H1 (cell line): ENCODE measurements at regions of chr14 and their contacts with region 1.

Region 1: DNA sequence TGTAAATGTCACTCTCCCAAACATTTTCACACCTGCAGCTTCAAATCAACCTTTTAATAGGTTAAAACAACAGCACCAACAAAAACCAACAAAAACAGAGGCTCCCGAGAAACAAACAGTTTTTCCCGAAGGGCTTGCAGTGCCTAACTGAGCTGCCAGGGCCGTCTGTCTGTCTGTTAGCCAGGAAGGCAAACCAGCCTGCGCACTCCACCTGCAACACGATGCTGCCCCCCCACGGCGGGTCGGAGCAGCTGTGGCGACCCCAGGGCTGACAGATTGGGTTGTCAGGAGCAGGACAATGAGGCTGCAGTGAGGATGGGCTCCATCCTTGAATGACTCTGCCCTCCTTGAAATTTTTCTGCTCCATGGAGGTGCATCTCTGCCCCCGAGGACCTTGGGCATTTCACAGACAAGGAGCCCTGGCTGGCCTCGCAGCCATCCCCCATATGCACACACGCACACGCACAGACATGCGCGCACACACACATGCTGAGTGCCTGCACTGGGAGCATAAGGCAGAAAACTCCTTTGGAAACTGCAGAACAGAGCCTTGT is 2.6 kb downstream of the RTL1 start:
- DNase-seq: peak in 1 of 2 experiments; percentile 87
- H3K4me3 ChIP-seq: peak overlapping the region; percentile 25 to 56 (median 41); a peak in 6 of 8 replicates
- H3K27ac ChIP-seq: no peak overlapping the region
- H3K4me1 ChIP-seq: peaks cover 5 to 36% (median 10%) of the 10 kb centered on the region in 4 experiments
- H3K27me3 ChIP-seq: peaks cover 3 to 35% (median 29%) of the 10 kb centered on the region in 4 experiments
- CTCF ChIP-seq: peak; percentile 79 to 90 (median 85)
- EP300 ChIP-seq: no peak
- POLR2A ChIP-seq: no peak
- RAD21 ChIP-seq: peak; percentile 92

Region 2: GRCh38 chr14:100830681-100831080 is 70.2 kb before region 1 on chr14:
- CTCF ChIA-PET with region 1: no interaction called
- POLR2A ChIA-PET with region 1: no interaction called
- DNase-seq: no peak
- H3K4me3 ChIP-seq: no peak overlapping the region
- H3K27ac ChIP-seq: no peak overlapping the region
- H3K4me1 ChIP-seq: peaks cover 1 to 19% (median 9%) of the 10 kb centered on the region in 4 experiments; a peak in 5 of 7 replicates
- H3K27me3 ChIP-seq: no peaks in the 10 kb centered on the region; a peak in 1 of 7 replicates
- CTCF ChIP-seq: no peak
- EP300 ChIP-seq: no peak
- POLR2A ChIP-seq: no peak
- RAD21 ChIP-seq: no peak

Region 3: DNA sequence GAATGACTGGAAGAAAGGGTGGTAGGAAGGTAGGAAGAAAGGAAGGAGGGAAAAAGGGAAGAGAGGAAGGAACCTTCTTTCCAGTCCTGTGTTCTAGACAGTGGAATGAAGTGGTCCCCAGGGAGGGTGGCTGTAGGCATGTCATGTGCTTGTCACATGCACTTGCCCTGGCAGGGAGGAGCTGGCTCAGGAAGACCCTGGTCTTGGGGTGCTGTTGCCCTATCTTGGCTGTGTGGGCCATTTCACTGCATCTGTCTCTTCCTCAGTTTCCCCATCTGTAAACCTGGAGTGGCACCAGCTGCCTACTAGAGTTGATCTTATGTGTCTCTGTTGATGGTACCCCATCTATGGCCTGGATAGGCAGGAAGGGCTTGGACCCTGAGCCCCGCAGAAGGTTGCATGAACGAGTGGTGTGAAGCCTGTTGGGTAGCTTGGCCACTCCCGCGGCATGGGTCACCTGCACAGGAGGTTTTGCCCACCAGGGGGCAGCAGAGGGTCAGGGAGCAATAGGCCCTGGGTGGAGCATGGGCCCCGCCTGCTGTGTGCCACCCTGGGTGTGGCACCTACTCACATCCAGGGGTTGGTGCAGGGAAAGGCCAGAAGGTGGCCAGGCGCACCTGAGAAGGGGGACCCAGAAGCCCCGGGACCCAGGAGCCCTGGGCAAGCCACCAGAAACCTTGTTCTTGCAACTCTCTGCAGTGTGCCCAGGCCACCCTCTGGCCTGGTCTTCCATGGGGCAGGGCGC is 49.9 kb before region 1 on chr14:
- CTCF ChIA-PET with region 1: interaction called, 70 read pairs
- POLR2A ChIA-PET with region 1: no interaction called
- DNase-seq: peak; percentile 44 to 95
- H3K4me3 ChIP-seq: no peak overlapping the region
- H3K27ac ChIP-seq: no peak overlapping the region
- H3K4me1 ChIP-seq: no peaks in the 10 kb centered on the region
- H3K27me3 ChIP-seq: no peaks in the 10 kb centered on the region
- CTCF ChIP-seq: peak; percentile 89 to 92 (median 90)
- EP300 ChIP-seq: no peak
- POLR2A ChIP-seq: no peak
- RAD21 ChIP-seq: peak; percentile 79 to 82

Region 4: DNA sequence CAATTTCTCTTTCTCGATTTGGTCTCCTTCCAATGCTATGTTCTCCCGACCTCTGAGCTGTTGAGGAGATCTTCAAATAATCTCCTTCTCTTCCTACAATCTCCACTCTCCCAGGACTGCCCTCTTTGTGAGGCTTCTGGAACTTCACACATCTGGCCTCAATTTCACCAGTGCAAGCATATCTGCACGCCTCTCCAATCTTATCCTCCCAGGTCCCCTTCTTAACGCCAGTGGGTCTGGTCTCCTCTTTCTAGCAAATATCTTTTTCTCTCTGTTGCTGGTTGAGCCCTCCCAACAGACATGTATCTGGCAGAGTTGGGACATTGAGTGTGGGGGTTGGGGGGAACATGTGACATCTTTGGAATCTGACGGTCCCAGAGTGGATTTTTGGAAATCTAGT is 15.3 kb before region 1 on chr14:
- CTCF ChIA-PET with region 1: interaction called, 10 read pairs
- POLR2A ChIA-PET with region 1: no interaction called
- DNase-seq: no peak
- H3K4me3 ChIP-seq: no peak overlapping the region
- H3K27ac ChIP-seq: no peak overlapping the region
- H3K4me1 ChIP-seq: no peaks in the 10 kb centered on the region; a peak in 2 of 7 replicates
- H3K27me3 ChIP-seq: no peaks in the 10 kb centered on the region; a peak in 2 of 7 replicates
- CTCF ChIP-seq: no peak
- EP300 ChIP-seq: no peak
- POLR2A ChIP-seq: no peak
- RAD21 ChIP-seq: no peak

Region 5: GRCh38 chr14:101062065-101062450 is 161.1 kb after region 1 on chr14:
- CTCF ChIA-PET with region 1: interaction called, 11 read pairs
- POLR2A ChIA-PET with region 1: no interaction called
- DNase-seq: no peak
- H3K4me3 ChIP-seq: no peak overlapping the region
- H3K27ac ChIP-seq: no peak overlapping the region
- H3K4me1 ChIP-seq: no peaks in the 10 kb centered on the region
- H3K27me3 ChIP-seq: peaks cover 0 to 2% (median 0%) of the 10 kb centered on the region in 4 experiments; a peak in 1 of 7 replicates
- CTCF ChIP-seq: no peak
- EP300 ChIP-seq: no peak
- POLR2A ChIP-seq: no peak
- RAD21 ChIP-seq: no peak

Region 6: DNA sequence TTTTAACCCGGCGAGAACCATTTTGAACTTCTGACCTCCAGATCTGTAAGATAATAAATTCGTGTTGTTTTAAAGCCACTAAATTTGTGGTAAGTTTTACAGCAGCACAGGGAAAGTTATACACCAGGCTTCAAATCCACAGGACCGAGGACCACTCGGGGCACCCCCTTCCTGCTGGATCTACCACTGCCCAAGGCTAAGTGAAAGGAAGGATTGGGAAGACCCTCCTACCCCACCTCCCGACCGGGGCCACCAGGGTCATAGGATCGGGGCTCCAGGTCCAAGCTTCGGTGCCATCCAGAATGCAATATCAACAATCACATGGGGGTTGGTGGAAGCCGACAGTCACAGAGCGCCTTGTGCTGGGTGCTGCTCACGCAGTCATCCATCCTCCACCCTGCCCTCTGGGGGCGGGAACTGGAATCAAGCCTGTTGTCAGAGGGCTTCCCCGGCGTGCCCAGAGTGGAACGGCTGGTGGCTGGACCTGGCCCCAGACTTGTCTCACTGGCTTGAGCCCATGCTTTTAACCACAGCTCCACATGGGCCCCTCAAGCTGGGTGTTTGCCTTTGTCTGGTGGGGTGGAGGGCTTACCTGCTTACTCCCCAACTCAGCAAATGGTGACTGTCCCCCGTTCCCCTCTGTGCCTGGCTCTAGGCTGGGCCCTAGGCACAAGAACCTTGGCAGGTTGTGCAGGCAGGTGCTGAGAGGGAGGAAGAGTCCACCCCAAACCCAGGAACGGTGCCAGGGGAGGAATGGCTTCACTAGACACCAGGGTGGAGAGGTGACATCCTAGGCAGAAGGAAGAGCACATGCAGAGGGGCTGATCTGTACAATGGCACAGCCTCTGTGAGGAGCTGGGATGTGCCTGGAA is 182.9 kb after region 1 on chr14:
- CTCF ChIA-PET with region 1: interaction called, 14 read pairs
- POLR2A ChIA-PET with region 1: no interaction called
- DNase-seq: peak in 1 of 2 experiments; percentile 80
- H3K4me3 ChIP-seq: no peak overlapping the region
- H3K27ac ChIP-seq: no peak overlapping the region
- H3K4me1 ChIP-seq: peaks cover 0 to 1% (median 0%) of the 10 kb centered on the region in 4 experiments; a peak in 2 of 7 replicates
- H3K27me3 ChIP-seq: no peaks in the 10 kb centered on the region
- CTCF ChIP-seq: peak; percentile 68 to 82 (median 79)
- EP300 ChIP-seq: no peak
- POLR2A ChIP-seq: no peak
- RAD21 ChIP-seq: peak; percentile 53 to 71

Region 7: DNA sequence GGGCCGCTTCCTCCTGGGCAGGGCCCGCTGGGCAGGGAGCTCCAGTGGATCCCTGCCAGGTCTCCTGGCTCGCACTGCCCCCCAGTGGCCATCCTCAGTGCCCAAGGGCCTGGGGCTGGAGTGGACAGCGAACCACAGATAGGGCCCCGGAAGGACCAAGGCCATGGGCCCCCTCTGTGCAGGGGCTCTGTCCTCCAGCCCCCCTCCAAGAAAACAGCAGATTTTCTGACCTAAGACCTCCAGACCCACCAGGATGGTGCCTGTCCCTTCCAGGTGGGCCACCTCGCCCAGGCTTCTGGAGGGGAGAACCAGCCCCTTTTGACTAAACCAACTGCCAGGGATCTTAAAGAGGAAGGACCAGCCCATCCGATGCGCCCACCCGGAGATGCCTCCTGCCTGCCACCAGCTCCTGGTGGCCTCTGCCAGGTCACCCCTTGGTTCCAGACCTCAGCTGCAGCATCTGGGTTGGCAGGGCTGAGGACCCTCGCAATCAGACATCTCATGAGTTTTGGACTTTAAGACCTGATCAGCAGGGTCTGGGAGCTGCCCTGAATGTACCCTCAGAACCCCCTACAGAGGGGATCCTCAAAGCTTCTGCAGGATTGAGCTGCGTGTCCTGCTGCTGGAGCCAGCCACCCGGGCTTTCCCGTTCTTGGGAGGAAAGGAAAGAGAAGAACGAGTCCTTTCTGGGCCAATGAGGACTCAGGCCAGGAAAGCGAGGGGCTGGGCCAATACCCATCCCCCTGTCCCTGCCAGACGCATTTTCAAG is 334.6 kb after region 1 on chr14:
- CTCF ChIA-PET with region 1: interaction called, 20 read pairs
- POLR2A ChIA-PET with region 1: no interaction called
- DNase-seq: peak in 1 of 2 experiments; percentile 89
- H3K4me3 ChIP-seq: no peak overlapping the region
- H3K27ac ChIP-seq: no peak overlapping the region
- H3K4me1 ChIP-seq: peaks cover 0 to 6% (median 0%) of the 10 kb centered on the region in 4 experiments; a peak in 3 of 7 replicates
- H3K27me3 ChIP-seq: no peaks in the 10 kb centered on the region; a peak in 1 of 7 replicates
- CTCF ChIP-seq: peak in 2 of 3 experiments; percentile 81 to 92; a peak in 3 of 4 replicates
- EP300 ChIP-seq: no peak
- POLR2A ChIP-seq: no peak
- RAD21 ChIP-seq: peak; percentile 92 to 96